Activated CD4-positive, alpha-beta T cell treated with anti-CD3 and anti-CD28 coated beads, Interleukin-2, amount 10 ng/mL, durations not matched to agents 7 days and 5 days (primary cell): ENCODE measurements at regions of chr2 and their contacts with region 1.

Region 1: GRCh38 chr2:219206442-219207253 is at the start of gene ZFAND2B:
- DNase-seq: peak; percentile 95
- H3K4me3 Mint-ChIP-seq: peak within 1 kb of the TSS; percentile 80
- H3K27ac Mint-ChIP-seq: peak within 1 kb of the TSS; percentile 95
- H3K4me1 Mint-ChIP-seq: peaks cover 52% of the 10 kb centered on the region
- H3K27me3 Mint-ChIP-seq: no peaks in the 10 kb centered on the region
- total RNA-seq, gene ZFAND2B: 49.1 to 60.2 TPM

Region 2: GRCh38 chr2:218710687-218711549 is 495.7 kb before region 1 on chr2 and contains the start of gene TTLL4:
- CTCF ChIA-PET with region 1: no interaction called
- POLR2A ChIA-PET with region 1: no interaction called
- DNase-seq: peak; percentile 98
- H3K4me3 Mint-ChIP-seq: peak within 1 kb of the TSS; percentile 98
- H3K27ac Mint-ChIP-seq: peak within 1 kb of the TSS; percentile 79
- H3K4me1 Mint-ChIP-seq: peaks cover 30% of the 10 kb centered on the region
- H3K27me3 Mint-ChIP-seq: peaks cover 10% of the 10 kb centered on the region
- total RNA-seq, gene TTLL4: 31.6 TPM

Region 3: DNA sequence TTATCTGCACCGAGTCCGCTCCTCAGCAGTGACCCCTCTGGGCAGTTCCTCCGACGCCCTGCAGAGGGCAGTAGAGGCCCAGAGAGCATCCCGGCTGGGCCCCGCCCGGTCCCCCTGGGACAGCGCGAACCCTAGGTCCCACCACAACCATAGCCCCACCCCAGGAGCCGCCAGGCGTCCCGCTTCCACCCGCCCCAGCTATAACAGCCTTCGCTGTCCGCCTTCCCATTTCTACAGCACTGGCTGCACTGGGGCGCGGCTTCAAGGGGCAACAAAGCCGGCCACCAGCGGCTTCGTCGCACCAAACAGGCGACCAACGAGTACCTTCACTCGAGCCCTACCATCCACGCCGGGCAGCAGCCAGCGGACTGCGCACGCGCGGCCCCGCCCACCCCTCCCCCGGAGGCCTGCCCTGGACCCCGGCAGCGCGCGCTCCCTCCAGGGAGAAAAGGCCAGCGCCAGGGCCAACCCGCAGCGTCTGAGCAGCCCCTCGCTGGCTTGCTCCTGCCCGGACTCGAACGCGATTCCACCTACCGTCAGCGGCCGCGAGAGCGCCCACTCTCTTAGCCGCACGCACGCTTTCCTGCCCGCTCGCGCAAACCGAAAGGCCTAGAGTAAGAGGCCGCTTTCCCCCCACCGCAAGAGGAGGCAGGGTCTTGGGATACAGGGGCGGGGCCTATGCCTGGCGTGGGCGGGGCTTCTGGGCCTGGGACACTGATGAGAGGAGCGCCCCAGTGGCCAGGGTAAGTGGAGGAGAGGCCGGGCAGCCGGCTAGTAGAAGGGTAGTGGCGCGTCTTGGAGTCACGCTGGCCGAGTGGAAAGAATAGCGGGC is 46.2 kb before region 1 on chr2 and contains the start of gene NHEJ1:
- CTCF ChIA-PET with region 1: interaction called, 18 read pairs
- POLR2A ChIA-PET with region 1: no interaction called
- DNase-seq: peak; percentile 92
- H3K4me3 Mint-ChIP-seq: peak within 1 kb of the TSS; percentile 84
- H3K27ac Mint-ChIP-seq: peak within 1 kb of the TSS; percentile 96
- H3K4me1 Mint-ChIP-seq: peaks cover 31% of the 10 kb centered on the region
- H3K27me3 Mint-ChIP-seq: no peaks in the 10 kb centered on the region
- total RNA-seq, gene NHEJ1: 18.1 to 20.3 TPM